CD4-positive, alpha-beta T cell (primary cell): ENCODE measurements at regions of chr13 and their contacts with region 1.

Region 1: GRCh38 chr13:38349390-38350113 is at the start of gene UFM1:
- DNase-seq: peak; percentile 74 to 96 (median 82)
- ATAC-seq: peak; percentile 93
- H3K4me3 ChIP-seq: peak within 1 kb of the TSS; percentile 92
- H3K4me3 Mint-ChIP-seq: peak within 1 kb of the TSS; percentile 98
- H3K27ac ChIP-seq: peak within 1 kb of the TSS; percentile 75 to 94
- H3K27ac Mint-ChIP-seq: peak within 1 kb of the TSS; percentile 97
- H3K4me1 ChIP-seq: peaks cover 8% of the 10 kb centered on the region
- H3K4me1 Mint-ChIP-seq: peaks cover 41% of the 10 kb centered on the region
- H3K27me3 ChIP-seq: no peaks in the 10 kb centered on the region
- H3K27me3 Mint-ChIP-seq: no peaks in the 10 kb centered on the region
- CTCF ChIP-seq: no peak
- total RNA-seq, gene UFM1: 68.7 to 70.3 TPM

Region 2: GRCh38 chr13:36346222-36347083 is 2003.1 kb before region 1 on chr13 and contains the start of gene SPART:
- CTCF ChIA-PET with region 1: no interaction called
- POLR2A ChIA-PET with region 1: no interaction called
- intact Hi-C with region 1: loop called in 1 of 2 experiments (anchors 5 kb)
- DNase-seq: peak; percentile 78 to 95 (median 85)
- ATAC-seq: peak; percentile 85
- H3K4me3 ChIP-seq: peak within 1 kb of the TSS; percentile 84
- H3K4me3 Mint-ChIP-seq: peak within 1 kb of the TSS; percentile 99
- H3K27ac ChIP-seq: peak within 1 kb of the TSS; percentile 77 to 96
- H3K27ac Mint-ChIP-seq: peak within 1 kb of the TSS; percentile 100
- H3K4me1 ChIP-seq: peaks cover 20% of the 10 kb centered on the region
- H3K4me1 Mint-ChIP-seq: peaks cover 43% of the 10 kb centered on the region
- H3K27me3 ChIP-seq: no peaks in the 10 kb centered on the region
- H3K27me3 Mint-ChIP-seq: peaks cover 18% of the 10 kb centered on the region
- CTCF ChIP-seq: peak; percentile 91
- total RNA-seq, gene SPART: 22.0 to 22.9 TPM

Region 3: GRCh38 chr13:36818804-36819738 is 1530.5 kb before region 1 on chr13 and contains the start of gene RFXAP:
- CTCF ChIA-PET with region 1: no interaction called
- POLR2A ChIA-PET with region 1: no interaction called
- intact Hi-C with region 1: loop called in 1 of 2 experiments (anchors 5 kb)
- DNase-seq: peak; percentile 83 to 96 (median 90)
- ATAC-seq: peak; percentile 89
- H3K4me3 ChIP-seq: peak within 1 kb of the TSS; percentile 83
- H3K4me3 Mint-ChIP-seq: peak within 1 kb of the TSS; percentile 89
- H3K27ac ChIP-seq: peak within 1 kb of the TSS; percentile 38 to 53
- H3K27ac Mint-ChIP-seq: peak within 1 kb of the TSS; percentile 90
- H3K4me1 ChIP-seq: peaks cover 29% of the 10 kb centered on the region
- H3K4me1 Mint-ChIP-seq: peaks cover 56% of the 10 kb centered on the region
- H3K27me3 ChIP-seq: no peaks in the 10 kb centered on the region
- H3K27me3 Mint-ChIP-seq: peaks cover 7% of the 10 kb centered on the region
- CTCF ChIP-seq: peak; percentile 28
- total RNA-seq, gene RFXAP: 5.8 to 6.0 TPM

Region 4: DNA sequence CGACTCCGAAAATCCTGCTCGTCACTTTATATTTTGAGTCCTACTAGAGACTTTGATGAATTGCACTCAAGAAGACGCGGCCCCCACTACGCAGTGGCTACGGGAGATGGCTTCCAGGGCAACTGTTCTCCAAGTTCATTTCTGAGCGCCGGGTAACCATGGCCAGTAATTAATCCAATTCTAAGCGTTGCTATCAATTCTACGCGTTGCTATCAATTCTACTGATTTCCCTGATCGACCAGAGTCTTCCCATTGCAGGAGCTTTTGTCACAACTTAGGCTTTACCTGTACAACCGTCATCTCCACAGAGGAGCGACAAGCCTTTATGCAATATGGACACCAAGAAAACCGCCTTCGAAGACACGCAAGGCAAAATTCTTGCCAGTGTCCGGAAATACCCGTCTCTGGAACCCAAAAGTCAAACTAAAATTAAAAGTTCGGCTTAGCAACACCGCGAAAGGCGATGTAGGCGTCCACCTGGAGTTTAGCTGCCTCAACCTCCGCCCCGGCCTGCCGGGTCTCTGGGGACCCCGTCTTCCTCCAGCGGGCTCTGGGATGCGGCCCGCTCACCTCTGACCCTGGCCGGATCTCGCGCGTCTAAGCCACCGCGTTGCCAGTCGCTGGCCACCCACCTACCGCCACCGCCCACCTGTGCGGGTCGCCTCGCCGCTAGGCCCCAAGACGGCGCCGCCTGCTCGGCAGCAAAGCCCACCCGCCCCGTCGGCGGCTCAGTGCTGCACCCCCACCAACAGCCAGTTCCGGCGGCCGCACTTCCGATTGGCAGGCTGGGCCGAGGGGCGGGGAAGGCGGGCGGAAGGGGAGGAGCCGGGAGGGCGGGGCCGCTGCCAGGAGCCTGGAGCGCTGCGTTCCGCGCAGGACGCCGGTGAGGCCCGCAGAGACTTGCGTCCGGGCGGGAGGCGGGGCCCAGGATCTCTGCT is 1290.4 kb before region 1 on chr13 and contains the start of gene SUPT20H:
- CTCF ChIA-PET with region 1: no interaction called
- POLR2A ChIA-PET with region 1: interaction called, 6 read pairs
- intact Hi-C with region 1: loop called in 1 of 2 experiments (anchors 5 kb)
- DNase-seq: peak; percentile 89 to 96 (median 94)
- ATAC-seq: peak; percentile 91
- H3K4me3 ChIP-seq: peak within 1 kb of the TSS; percentile 96
- H3K4me3 Mint-ChIP-seq: peak within 1 kb of the TSS; percentile 95
- H3K27ac ChIP-seq: peak within 1 kb of the TSS; percentile 93
- H3K27ac Mint-ChIP-seq: peak within 1 kb of the TSS; percentile 99
- H3K4me1 ChIP-seq: peaks cover 16% of the 10 kb centered on the region
- H3K4me1 Mint-ChIP-seq: peaks cover 43% of the 10 kb centered on the region
- H3K27me3 ChIP-seq: no peaks in the 10 kb centered on the region
- H3K27me3 Mint-ChIP-seq: no peaks in the 10 kb centered on the region
- CTCF ChIP-seq: no peak
- total RNA-seq, gene SUPT20H: 61.7 to 63.1 TPM

Region 5: DNA sequence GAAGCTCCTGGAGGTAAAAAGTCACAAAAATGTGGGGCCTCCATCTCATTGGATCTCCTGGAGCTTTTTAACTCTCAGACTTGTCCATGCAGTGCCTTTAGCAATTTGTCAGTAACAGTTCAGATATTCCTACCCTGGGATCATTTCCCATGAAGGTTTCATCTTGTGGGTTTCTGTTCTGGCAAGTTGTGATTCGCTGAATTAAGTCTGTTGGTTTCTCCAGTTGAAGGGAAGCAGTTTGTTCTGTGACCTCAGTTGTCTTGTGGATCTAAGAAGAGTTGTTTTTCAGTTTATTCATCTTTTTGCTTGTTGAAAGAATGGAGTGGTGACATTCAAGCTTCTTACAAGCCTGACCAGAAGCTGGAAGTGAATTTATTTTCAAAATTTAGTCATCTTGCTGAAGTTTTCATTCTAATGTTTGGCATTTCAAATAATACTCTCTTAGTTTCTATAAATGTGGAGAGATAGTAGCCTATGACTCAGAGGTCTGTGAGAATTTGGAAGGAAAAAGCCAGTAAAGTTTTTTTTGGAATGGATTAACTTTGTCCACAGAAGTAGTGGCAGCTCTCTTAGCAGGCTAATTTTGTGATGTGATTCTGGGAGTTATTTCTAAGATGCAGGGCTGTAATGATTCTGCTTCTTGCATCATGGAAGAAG is 1124.0 kb before region 1 on chr13:
- CTCF ChIA-PET with region 1: no interaction called
- POLR2A ChIA-PET with region 1: no interaction called
- intact Hi-C with region 1: no loop called
- DNase-seq: no peak
- ATAC-seq: no peak
- H3K4me3 ChIP-seq: no peak overlapping the region
- H3K4me3 Mint-ChIP-seq: no peak overlapping the region
- H3K27ac ChIP-seq: no peak overlapping the region
- H3K27ac Mint-ChIP-seq: no peak overlapping the region
- H3K4me1 ChIP-seq: no peaks in the 10 kb centered on the region
- H3K4me1 Mint-ChIP-seq: no peaks in the 10 kb centered on the region
- H3K27me3 ChIP-seq: no peaks in the 10 kb centered on the region
- H3K27me3 Mint-ChIP-seq: no peaks in the 10 kb centered on the region
- CTCF ChIP-seq: no peak

Region 6: GRCh38 chr13:38376546-38376945 is 27.0 kb after region 1 on chr13:
- CTCF ChIA-PET with region 1: no interaction called
- POLR2A ChIA-PET with region 1: no interaction called
- intact Hi-C with region 1: no loop called
- DNase-seq: no peak
- ATAC-seq: no peak
- H3K4me3 ChIP-seq: no peak overlapping the region
- H3K4me3 Mint-ChIP-seq: no peak overlapping the region
- H3K27ac ChIP-seq: no peak overlapping the region
- H3K27ac Mint-ChIP-seq: no peak overlapping the region
- H3K4me1 ChIP-seq: no peaks in the 10 kb centered on the region
- H3K4me1 Mint-ChIP-seq: no peaks in the 10 kb centered on the region
- H3K27me3 ChIP-seq: peaks cover 5 to 7% of the 10 kb centered on the region in 2 experiments
- H3K27me3 Mint-ChIP-seq: peaks cover 44% of the 10 kb centered on the region
- CTCF ChIP-seq: no peak

Region 7: GRCh38 chr13:38440666-38441065 is 91.1 kb after region 1 on chr13:
- CTCF ChIA-PET with region 1: no interaction called
- POLR2A ChIA-PET with region 1: no interaction called
- intact Hi-C with region 1: no loop called
- DNase-seq: no peak
- ATAC-seq: no peak
- H3K4me3 ChIP-seq: no peak overlapping the region
- H3K4me3 Mint-ChIP-seq: no peak overlapping the region
- H3K27ac ChIP-seq: no peak overlapping the region
- H3K27ac Mint-ChIP-seq: no peak overlapping the region
- H3K4me1 ChIP-seq: no peaks in the 10 kb centered on the region
- H3K4me1 Mint-ChIP-seq: no peaks in the 10 kb centered on the region
- H3K27me3 ChIP-seq: no peaks in the 10 kb centered on the region
- H3K27me3 Mint-ChIP-seq: peaks cover 6% of the 10 kb centered on the region
- CTCF ChIP-seq: no peak

Region 8: DNA sequence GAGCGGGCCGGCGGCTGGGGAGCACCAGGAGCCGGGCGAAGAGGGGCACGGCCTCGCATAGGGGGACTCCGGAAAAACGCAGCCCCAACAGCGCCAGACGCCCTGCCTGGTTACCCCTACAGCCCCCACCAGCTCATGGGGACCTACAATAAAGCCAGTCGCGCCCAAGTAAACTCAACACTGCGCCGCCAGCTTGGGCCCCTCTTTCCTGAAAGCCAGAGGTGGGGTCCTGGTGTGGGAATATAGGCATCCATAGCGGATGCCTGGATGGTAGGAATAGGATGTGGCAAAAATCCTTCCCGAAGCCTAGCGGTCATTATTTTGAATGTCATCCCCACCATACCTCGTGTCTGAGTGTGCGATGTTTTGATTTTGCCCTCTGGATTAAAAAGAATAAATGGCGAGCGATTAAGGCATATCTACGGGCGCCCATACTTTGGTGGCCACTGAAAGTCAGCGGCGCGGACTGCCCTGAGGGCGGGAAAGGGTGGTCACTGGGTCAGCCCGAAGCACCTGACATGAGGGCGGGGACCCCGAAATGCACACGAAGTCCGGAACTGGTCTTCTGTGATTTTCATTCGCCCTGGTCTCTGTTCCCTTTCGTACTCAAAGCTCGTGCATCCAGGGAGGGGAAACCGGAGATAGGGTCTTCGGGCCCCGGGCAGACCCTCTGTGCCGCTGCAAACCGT is 688.5 kb after region 1 on chr13 and contains the starts of genes NHLRC3 and PROSER1:
- CTCF ChIA-PET with region 1: no interaction called
- POLR2A ChIA-PET with region 1: interaction called, 11 read pairs
- intact Hi-C with region 1: loop called in 1 of 2 experiments (anchors 5 kb)
- DNase-seq: peak; percentile 65 to 90 (median 76)
- ATAC-seq: peak; percentile 76
- H3K4me3 ChIP-seq: peak within 1 kb of the TSS; percentile 80
- H3K4me3 Mint-ChIP-seq: peak within 1 kb of the TSS; percentile 95
- H3K27ac ChIP-seq: peak within 1 kb of the TSS; percentile 64 to 76
- H3K27ac Mint-ChIP-seq: peak within 1 kb of the TSS; percentile 98
- H3K4me1 ChIP-seq: peaks cover 12% of the 10 kb centered on the region
- H3K4me1 Mint-ChIP-seq: peaks cover 89% of the 10 kb centered on the region
- H3K27me3 ChIP-seq: no peaks in the 10 kb centered on the region
- H3K27me3 Mint-ChIP-seq: no peaks in the 10 kb centered on the region
- CTCF ChIP-seq: no peak
- total RNA-seq, gene NHLRC3: 3.9 to 5.9 TPM
- total RNA-seq, gene PROSER1: 29.3 to 35.3 TPM

Region 9: GRCh38 chr13:39044536-39044935 is 695.0 kb after region 1 on chr13:
- CTCF ChIA-PET with region 1: no interaction called
- POLR2A ChIA-PET with region 1: no interaction called
- intact Hi-C with region 1: loop called in 1 of 2 experiments (anchors 5 kb)
- DNase-seq: no peak
- ATAC-seq: no peak
- H3K4me3 ChIP-seq: no peak overlapping the region
- H3K4me3 Mint-ChIP-seq: no peak overlapping the region
- H3K27ac ChIP-seq: no peak overlapping the region
- H3K27ac Mint-ChIP-seq: no peak overlapping the region
- H3K4me1 ChIP-seq: peaks cover 3% of the 10 kb centered on the region
- H3K4me1 Mint-ChIP-seq: peaks cover 29% of the 10 kb centered on the region
- H3K27me3 ChIP-seq: no peaks in the 10 kb centered on the region
- H3K27me3 Mint-ChIP-seq: no peaks in the 10 kb centered on the region
- CTCF ChIP-seq: no peak